Psoas muscle (tissue), 8 donors: ENCODE measurements at regions of chr18 and their contacts with region 1.

Region 1: DNA sequence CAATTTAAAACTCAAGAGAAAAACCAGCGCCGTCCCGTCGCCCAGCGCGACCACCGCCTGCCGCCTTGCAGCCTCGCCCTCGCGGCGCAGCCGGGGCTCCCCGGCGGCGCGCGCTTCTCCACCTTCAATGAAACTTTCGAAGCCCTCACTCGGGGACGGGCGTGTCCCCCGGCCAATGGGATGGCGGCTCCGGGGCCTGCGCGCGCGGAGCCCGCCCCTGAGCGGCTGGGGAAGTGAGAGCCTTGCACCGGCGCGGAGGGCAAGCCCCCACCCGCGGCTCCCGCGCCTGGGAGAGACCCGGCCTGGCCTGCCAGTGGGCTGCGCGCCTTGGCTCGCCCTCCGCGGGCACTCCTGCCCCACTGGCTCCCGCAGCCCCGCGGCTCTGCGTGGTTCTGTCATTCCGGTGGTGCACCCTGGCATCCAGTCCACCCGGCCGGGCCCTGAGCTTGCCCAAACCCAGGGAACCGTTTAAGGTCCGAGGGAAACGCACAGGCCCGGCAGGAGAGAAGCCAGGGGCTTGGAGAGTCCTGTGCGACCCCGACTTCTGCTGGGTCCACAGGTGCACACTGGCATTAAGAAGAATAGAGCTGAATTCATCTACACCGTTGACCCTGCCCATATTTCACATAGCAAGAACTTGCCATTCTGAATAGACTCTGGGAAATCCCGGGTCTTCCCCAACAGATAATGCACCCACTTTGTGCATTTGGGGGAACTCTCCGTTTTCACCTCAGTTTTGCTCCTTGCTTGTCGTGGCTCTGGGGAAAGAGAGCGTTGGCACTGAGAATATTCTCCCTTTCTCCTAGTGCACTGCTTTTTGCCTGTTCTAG is at the start of gene PIEZO2:
- DNase-seq: peak; percentile 71 to 73
- ATAC-seq: peak; percentile 77 to 96 (median 94)
- H3K4me3 ChIP-seq: peak within 1 kb of the TSS; percentile 72
- H3K27ac ChIP-seq: no peak within 1 kb of the TSS
- H3K4me1 ChIP-seq: no peaks in the 10 kb centered on the region
- H3K27me3 ChIP-seq: peaks cover 0 to 31% (median 16%) of the 10 kb centered on the region in 3 donors
- CTCF ChIP-seq: no peak
- total RNA-seq, gene PIEZO2: 0.06 to 0.64 (median 0.17) TPM

Region 2: GRCh38 chr18:10928772-10929373 is 220.8 kb before region 1 on chr18:
- intact Hi-C with region 1: no loop called
- DNase-seq: no peak
- ATAC-seq: no peak
- H3K4me3 ChIP-seq: no peak overlapping the region
- H3K27ac ChIP-seq: no peak overlapping the region
- H3K4me1 ChIP-seq: peaks cover 4% of the 10 kb centered on the region
- H3K27me3 ChIP-seq: peaks cover 0 to 11% (median 0%) of the 10 kb centered on the region in 3 donors
- CTCF ChIP-seq: no peak

Region 3: DNA sequence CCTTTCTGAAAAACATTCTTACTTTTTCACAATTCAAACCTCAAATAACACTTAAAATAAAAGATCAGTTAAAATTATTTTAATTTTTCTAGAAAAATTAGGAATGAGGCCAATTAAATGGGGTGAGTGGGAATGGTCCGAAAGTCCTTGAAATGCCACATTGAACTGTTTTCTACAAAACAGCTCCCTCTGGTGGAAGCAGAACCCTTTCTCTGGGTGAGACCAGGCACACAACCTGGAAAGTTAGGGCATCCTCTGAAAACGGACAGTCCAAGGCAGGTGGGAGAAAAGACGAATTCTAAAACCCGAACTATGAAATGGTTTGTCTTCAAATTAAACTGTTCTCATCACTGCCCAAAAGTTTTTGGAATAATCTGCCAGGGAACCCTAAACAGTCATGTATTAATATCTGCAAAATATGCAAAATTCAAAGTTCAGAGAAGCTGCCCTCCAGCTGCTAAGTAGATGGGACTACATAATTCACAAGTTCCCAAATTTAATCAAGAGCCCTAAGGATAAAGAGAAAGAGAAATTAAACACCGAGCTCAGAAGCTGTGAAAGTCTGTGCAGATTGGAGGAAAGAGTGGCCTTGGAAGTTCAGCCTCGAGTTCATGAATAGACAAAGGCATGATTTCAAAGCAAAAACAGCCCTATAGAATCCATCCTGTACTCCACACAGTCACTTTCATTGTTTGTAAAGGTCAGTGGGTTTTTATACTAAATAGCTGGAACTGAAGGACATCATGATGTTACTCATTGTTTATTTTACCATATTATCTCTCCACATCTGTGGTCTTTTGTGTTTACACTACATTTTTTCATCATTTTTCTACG is 108.6 kb before region 1 on chr18:
- intact Hi-C with region 1: loop called in 1 of 2 experiments (anchors 5 kb)
- DNase-seq: no peak
- ATAC-seq: peak in 3 of 4 donors; percentile 51 to 64 (median 61)
- H3K4me3 ChIP-seq: no peak overlapping the region
- H3K27ac ChIP-seq: no peak overlapping the region
- H3K4me1 ChIP-seq: no peaks in the 10 kb centered on the region
- H3K27me3 ChIP-seq: peaks cover 0 to 2% (median 0%) of the 10 kb centered on the region in 3 donors
- CTCF ChIP-seq: peak; percentile 81